Activated B cell treated with CpG ODN at 0.5 μM for 24 hours (primary cell): ENCODE measurements at regions of chr16 and their contacts with region 1.

Region 1: DNA sequence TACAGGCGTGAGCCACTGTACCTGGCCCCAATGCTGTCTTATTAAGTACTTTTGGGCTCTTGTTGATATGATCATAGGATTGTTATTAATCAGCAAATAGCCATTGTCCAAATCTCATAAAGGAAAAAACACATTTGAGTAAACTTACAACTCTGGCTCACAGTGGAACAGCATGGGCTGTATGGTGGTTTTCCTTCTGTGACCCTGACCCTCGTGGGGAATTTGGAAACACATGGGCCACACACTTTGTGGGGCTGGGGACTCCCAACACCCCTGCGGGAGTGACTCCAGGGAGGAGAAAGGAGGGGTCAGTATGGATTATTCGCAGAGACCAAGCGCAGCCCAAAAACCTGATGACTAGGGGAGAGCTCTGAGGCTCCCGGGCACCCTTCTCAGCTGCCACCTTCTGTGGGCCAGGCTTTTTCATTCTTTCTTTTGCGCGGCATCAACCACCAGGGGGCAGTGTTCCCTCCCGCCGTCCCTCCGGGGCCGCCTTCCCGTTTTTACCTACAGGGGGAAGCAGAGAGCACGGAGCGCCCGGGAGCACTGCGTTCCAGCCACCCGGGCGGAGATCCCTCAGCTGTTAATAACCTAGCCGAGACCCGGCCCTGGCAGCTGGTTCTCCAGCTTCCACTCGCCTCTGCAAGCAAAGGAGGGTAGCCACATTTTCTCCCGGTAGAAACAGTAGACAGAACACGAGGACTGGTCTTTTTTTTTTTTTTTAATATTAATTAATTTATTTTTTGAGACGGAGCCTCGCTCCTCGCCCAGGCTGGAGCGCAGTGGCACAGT is 9.7 kb downstream of the TSNAXIP1 start:
- DNase-seq: peak; percentile 92
- ATAC-seq: peak; percentile 98
- H3K4me3 Mint-ChIP-seq: peak overlapping the region; percentile 65
- H3K27ac Mint-ChIP-seq: peak overlapping the region; percentile 24
- H3K4me1 Mint-ChIP-seq: peaks cover 6% of the 10 kb centered on the region
- H3K27me3 Mint-ChIP-seq: no peaks in the 10 kb centered on the region
- CTCF ChIP-seq: peak; percentile 94

Region 2: DNA sequence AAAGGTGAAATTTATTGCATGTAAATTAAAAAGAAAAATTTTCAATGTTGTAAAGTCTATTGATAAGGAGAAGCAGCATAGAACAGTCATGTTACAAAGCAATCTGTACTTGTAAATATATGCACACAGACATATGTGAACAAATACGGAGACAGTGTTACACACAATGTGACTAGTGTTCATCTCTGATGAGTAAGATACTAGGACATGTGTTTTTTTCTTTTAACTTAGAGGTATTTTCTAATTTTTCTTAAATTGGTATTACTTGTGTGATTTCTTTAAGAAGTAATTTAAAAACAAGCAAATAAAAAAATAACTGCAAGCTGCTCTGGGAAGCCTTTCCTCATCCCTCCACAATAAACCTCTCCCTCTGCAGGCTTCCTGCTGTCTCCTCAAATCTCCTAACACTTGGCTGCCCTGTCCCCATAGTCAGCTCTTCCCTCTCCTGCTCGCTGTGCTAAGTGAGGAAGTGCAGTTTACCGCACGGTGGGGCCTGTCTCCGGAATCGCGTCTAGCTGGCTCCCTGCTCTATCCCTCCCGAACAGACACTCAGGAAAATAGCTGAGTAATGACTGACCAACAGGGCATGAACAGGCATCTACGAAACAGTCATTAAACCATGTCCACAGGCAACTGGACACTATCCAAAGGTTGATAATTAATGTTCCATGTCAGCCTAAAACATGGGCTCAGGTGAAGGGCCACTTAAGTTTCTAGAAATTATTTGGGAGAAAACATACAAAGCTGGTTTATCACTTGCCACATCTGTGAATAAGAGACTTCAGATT is 1155.8 kb before region 1 on chr16:
- CTCF ChIA-PET with region 1: no interaction called
- POLR2A ChIA-PET with region 1: no interaction called
- intact Hi-C with region 1: no loop called
- DNase-seq: no peak
- ATAC-seq: no peak
- H3K4me3 Mint-ChIP-seq: no peak overlapping the region
- H3K27ac Mint-ChIP-seq: no peak overlapping the region
- H3K4me1 Mint-ChIP-seq: no peaks in the 10 kb centered on the region
- H3K27me3 Mint-ChIP-seq: peaks cover 16% of the 10 kb centered on the region
- CTCF ChIP-seq: no peak

Region 3: DNA sequence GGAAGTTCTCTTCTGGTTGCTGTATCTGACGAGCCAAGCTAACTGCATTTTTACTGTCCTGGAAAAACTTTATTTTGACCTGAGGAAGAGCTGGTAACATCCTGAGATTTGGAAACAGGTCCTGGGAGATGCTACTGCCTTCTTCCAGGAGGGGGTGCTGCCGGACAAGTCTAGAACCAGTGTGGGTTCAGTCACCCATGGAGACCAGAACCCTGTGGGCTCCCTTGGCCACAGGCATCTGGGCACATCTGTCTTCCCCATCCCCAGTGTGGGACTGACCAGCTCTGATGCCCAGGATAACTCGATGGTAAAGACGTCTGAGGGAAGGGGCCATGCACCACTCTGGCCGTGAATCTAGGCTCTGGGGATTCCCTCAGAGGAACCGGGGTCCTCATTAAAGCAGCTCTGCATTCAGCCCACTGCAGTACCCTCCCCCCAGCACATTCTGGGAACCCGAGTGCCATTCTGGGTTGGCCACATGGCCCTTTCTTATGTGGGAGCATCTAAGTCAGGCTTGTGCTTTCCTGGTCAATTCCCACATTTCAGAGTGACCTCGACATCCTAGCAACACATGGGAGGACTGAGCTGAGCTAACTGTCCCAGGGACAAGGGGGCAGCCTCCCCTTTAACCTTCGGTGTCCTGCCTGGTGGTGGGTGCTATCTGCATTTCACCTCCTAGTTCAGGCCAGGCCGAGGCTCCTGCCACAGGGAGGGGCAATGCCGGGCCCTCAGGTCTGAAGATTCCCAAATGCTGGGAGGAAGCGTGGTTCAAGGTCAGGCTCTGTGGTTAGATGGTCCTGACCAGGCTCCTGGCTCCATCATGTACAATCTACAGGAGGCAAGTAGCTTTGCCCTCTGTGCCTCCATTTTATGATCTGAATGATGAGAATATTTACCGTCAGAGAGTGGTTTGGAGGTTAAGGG is 143.4 kb before region 1 on chr16:
- CTCF ChIA-PET with region 1: interaction called, 12 read pairs
- POLR2A ChIA-PET with region 1: no interaction called
- intact Hi-C with region 1: loop called (anchors 1 kb)
- DNase-seq: no peak
- ATAC-seq: peak; percentile 42
- H3K4me3 Mint-ChIP-seq: no peak overlapping the region
- H3K27ac Mint-ChIP-seq: peak overlapping the region; percentile 3
- H3K4me1 Mint-ChIP-seq: peaks cover 42% of the 10 kb centered on the region
- H3K27me3 Mint-ChIP-seq: no peaks in the 10 kb centered on the region
- CTCF ChIP-seq: no peak

Region 4: DNA sequence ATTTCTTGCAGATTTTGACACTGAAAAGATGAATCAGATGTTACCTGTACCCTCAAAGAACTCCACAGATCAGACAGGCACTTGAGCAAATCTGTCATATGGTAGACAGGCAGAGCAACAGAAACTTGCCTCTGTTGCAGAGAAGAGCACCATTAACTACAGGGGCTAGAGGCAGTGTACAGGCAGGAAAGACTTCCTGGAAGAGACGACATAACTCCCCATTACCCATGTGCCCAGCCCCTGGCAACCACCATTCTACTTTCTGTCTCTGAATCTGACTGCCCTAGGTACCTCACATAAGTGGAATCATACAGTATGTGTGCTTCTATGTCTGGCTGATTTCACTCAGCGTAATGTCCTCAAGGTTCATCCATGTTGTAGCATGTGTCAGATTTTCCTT is 112.8 kb before region 1 on chr16:
- CTCF ChIA-PET with region 1: no interaction called
- POLR2A ChIA-PET with region 1: no interaction called
- intact Hi-C with region 1: no loop called
- DNase-seq: no peak
- ATAC-seq: no peak
- H3K4me3 Mint-ChIP-seq: no peak overlapping the region
- H3K27ac Mint-ChIP-seq: no peak overlapping the region
- H3K4me1 Mint-ChIP-seq: no peaks in the 10 kb centered on the region
- H3K27me3 Mint-ChIP-seq: no peaks in the 10 kb centered on the region
- CTCF ChIP-seq: no peak

Region 5: DNA sequence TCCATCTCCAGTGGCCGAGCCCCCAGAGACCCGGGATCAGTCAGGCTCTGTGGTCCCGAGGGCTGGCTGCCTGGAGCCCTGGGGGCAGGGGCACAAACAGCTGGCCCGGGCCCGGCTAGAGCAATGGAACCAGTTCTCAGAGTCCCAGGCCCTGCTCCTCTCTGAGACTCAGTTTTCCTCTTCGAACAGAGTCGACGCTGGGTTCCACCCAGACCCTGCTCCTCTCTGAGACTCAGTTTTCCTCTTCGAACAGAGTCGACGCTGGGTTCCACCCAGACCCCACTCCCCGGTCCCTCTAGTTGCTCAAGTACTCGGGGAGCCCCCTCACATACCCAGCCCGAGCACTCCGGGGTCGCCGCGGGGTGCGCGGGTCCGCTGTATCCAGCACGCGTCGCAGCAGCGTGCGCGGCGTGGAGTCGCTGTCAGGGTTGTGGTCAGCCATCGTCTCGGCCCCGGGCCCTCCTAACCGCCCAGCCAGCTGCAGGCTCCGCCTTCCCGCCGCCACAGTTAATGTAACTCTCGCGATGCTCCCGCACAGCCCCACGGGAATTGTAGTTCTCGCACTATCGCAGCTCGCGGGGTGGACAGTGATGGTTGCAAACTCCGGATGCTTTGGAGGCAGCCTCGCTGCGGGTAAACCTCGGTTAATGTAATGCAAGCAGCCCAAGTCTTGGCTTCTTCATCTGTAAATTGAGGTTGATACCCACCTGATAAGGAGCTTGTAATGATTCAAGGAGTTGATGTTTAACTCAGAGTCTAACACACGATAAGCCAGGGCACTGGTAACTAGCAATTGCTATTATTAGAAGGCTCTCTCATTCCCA is 17.2 kb after region 1 on chr16:
- CTCF ChIA-PET with region 1: interaction called, 20 read pairs
- POLR2A ChIA-PET with region 1: interaction called, 8 read pairs
- intact Hi-C with region 1: loop called (anchors 1 kb)
- DNase-seq: peak; percentile 91
- ATAC-seq: peak; percentile 100
- H3K4me3 Mint-ChIP-seq: peak overlapping the region; percentile 86
- H3K27ac Mint-ChIP-seq: peak overlapping the region; percentile 56
- H3K4me1 Mint-ChIP-seq: peaks cover 14% of the 10 kb centered on the region
- H3K27me3 Mint-ChIP-seq: no peaks in the 10 kb centered on the region
- CTCF ChIP-seq: no peak

Region 6: DNA sequence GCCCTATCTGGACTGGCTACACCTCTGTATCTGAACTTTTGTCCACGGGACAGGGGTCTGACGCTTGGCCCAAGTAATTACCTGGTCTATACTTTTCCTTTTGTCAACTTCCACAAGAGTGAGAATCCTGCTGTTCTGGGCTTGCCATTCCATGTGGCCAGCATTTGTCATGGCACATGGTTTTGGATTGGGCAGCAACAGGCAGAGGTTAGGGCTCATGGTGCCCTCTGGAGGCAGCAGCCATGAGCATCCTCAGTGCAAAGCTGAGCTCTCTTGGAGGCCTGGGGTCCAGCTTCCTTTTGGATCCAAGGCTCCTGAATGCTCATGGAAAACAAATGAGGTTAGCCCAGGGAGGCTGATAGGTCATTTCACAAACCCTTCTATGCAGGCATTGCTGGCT is 48.9 kb after region 1 on chr16:
- CTCF ChIA-PET with region 1: interaction called, 23 read pairs
- POLR2A ChIA-PET with region 1: interaction called, 4 read pairs
- intact Hi-C with region 1: loop called (anchors 1 kb)
- DNase-seq: no peak
- ATAC-seq: peak; percentile 57
- H3K4me3 Mint-ChIP-seq: no peak overlapping the region
- H3K27ac Mint-ChIP-seq: no peak overlapping the region
- H3K4me1 Mint-ChIP-seq: peaks cover 6% of the 10 kb centered on the region
- H3K27me3 Mint-ChIP-seq: no peaks in the 10 kb centered on the region
- CTCF ChIP-seq: no peak

Region 7: GRCh38 chr16:67928561-67929364 is 112.3 kb after region 1 on chr16:
- CTCF ChIA-PET with region 1: interaction called, 12 read pairs
- POLR2A ChIA-PET with region 1: interaction called, 4 read pairs
- intact Hi-C with region 1: loop called (anchors 1 kb)
- DNase-seq: peak; percentile 64
- ATAC-seq: peak; percentile 90
- H3K4me3 Mint-ChIP-seq: no peak overlapping the region
- H3K27ac Mint-ChIP-seq: no peak overlapping the region
- H3K4me1 Mint-ChIP-seq: peaks cover 36% of the 10 kb centered on the region
- H3K27me3 Mint-ChIP-seq: no peaks in the 10 kb centered on the region
- CTCF ChIP-seq: peak; percentile 43

Region 8: GRCh38 chr16:68229431-68230198 is 413.2 kb after region 1 on chr16:
- CTCF ChIA-PET with region 1: interaction called, 22 read pairs
- POLR2A ChIA-PET with region 1: no interaction called
- intact Hi-C with region 1: loop called (anchors 1 kb)
- DNase-seq: no peak
- ATAC-seq: peak; percentile 63
- H3K4me3 Mint-ChIP-seq: no peak overlapping the region
- H3K27ac Mint-ChIP-seq: peak overlapping the region; percentile 41
- H3K4me1 Mint-ChIP-seq: peaks cover 35% of the 10 kb centered on the region
- H3K27me3 Mint-ChIP-seq: no peaks in the 10 kb centered on the region
- CTCF ChIP-seq: peak; percentile 29

Region 9: GRCh38 chr16:68744369-68745280 is 928.2 kb after region 1 on chr16:
- CTCF ChIA-PET with region 1: no interaction called
- POLR2A ChIA-PET with region 1: no interaction called
- intact Hi-C with region 1: no loop called
- DNase-seq: no peak
- ATAC-seq: no peak
- H3K4me3 Mint-ChIP-seq: no peak overlapping the region
- H3K27ac Mint-ChIP-seq: no peak overlapping the region
- H3K4me1 Mint-ChIP-seq: peaks cover 22% of the 10 kb centered on the region
- H3K27me3 Mint-ChIP-seq: no peaks in the 10 kb centered on the region
- CTCF ChIP-seq: no peak